CD4-positive, alpha-beta memory T cell (primary cell): ENCODE measurements at regions of chr1 and their contacts with region 1.

Region 1: DNA sequence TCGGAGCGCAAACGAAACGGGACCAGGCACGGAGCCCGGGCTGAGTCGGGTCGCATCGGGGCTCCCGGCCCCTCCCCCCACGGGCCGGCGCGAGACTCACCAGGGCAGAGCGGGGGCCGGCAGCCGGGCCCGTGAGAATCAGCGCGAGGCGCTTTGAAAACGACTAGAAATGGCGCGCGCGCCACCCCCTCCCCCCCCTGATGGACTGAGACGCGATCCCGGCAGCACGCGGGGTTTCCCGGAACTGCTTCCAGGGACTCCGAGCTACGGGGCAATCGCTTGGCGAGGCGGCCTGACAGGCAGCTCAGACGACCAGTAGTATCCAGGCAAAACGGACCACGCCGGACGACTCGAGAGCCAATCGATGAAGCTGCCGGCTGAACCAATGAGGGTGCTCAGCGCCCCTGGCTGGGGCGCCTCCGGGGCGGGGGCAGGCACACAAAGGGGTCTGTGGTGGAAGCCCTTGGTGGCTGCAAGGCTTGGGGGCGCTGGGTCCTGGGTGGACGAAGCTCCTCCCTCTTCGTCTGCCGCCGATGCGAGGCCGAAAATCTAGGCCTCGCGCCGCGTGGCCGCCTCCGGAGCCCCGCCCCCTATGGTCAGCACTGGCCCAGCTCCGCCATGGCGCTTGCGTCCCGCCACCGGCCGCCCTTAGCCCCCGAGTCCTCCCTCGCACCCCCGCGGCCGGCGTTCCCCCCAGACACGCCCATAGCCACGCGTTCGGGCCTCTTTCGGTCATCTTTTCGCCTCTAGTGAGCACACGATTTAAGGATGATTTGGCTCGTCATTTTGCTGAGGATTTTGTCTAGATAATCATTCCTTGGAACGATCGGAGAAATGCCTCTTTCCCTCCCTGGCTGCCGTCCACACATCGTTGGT is at the start of gene HNRNPR:
- DNase-seq: peak; percentile 96 to 99 (median 98)
- H3K4me3 ChIP-seq: peak within 1 kb of the TSS; percentile 79 to 89
- H3K4me3 Mint-ChIP-seq: peak within 1 kb of the TSS; percentile 92 to 99 (median 98)
- H3K27ac ChIP-seq: peak within 1 kb of the TSS; percentile 75
- H3K27ac Mint-ChIP-seq: peak within 1 kb of the TSS; percentile 93 to 99 (median 96)
- H3K4me1 ChIP-seq: peaks cover 42% of the 10 kb centered on the region
- H3K4me1 Mint-ChIP-seq: peaks cover 35 to 53% (median 42%) of the 10 kb centered on the region in 4 donors
- H3K27me3 ChIP-seq: no peaks in the 10 kb centered on the region
- H3K27me3 Mint-ChIP-seq: no peaks in the 10 kb centered on the region
- total RNA-seq, gene HNRNPR: 115 to 124 TPM

Region 2: DNA sequence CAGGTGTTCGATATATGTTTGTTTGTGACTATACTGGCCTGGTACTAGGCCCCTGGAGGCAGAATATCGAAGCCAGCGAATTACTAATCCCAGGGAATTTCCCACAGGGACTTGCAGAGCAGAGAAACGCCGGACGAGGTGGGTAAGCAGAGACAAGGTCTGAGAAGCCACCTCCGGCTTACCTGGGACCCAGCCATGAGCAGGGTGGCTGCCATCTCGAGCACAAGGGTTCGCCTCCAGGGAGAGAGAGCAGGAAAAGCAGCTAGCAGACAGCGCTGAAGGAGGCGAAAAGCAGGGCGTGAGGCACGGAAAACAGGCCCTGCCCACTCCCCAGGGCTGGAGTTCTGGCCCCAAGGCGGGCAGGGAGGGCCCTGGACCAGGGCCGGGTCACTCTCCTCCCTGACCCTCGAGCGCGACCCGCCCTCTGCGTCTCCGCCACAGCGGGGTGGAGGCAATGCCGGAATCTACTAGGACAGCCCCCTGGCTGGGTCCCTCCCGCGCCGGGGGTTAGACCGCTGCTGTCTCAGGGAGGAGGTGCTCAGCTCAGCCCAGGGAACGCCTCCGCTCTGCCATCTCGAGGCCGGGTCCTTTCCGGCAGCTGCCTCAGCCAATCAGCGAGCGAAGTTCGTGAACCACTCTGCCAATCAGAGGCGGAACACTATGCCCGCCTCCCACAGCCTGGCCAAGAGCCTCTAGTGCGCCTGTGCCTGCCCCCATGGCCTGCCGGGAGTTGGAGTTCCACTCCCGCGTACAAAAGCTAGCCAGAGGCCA is 23.6 kb after region 1 on chr1:
- CTCF ChIA-PET with region 1: interaction called, 11 read pairs
- POLR2A ChIA-PET with region 1: interaction called, 112 read pairs
- intact Hi-C with region 1: loop called (anchors 1 kb)
- DNase-seq: peak; percentile 96 to 99 (median 98)
- H3K4me3 ChIP-seq: peak overlapping the region; percentile 98 to 100
- H3K4me3 Mint-ChIP-seq: peak overlapping the region; percentile 96 to 99 (median 99)
- H3K27ac ChIP-seq: peak overlapping the region; percentile 89
- H3K27ac Mint-ChIP-seq: peak overlapping the region; percentile 95 to 100 (median 98)
- H3K4me1 ChIP-seq: peaks cover 22% of the 10 kb centered on the region
- H3K4me1 Mint-ChIP-seq: peaks cover 17 to 46% (median 28%) of the 10 kb centered on the region in 4 donors
- H3K27me3 ChIP-seq: no peaks in the 10 kb centered on the region
- H3K27me3 Mint-ChIP-seq: no peaks in the 10 kb centered on the region

Region 3: GRCh38 chr1:23403735-23404486 is 59.6 kb after region 1 on chr1:
- CTCF ChIA-PET with region 1: interaction called, 9 read pairs
- POLR2A ChIA-PET with region 1: no interaction called
- intact Hi-C with region 1: loop called (anchors 5 kb)
- DNase-seq: peak; percentile 69 to 76 (median 74)
- H3K4me3 ChIP-seq: no peak overlapping the region
- H3K4me3 Mint-ChIP-seq: no peak overlapping the region
- H3K27ac ChIP-seq: no peak overlapping the region
- H3K27ac Mint-ChIP-seq: peak overlapping the region in 2 of 7 donors; percentile 14 to 22
- H3K4me1 ChIP-seq: peaks cover 11% of the 10 kb centered on the region
- H3K4me1 Mint-ChIP-seq: peaks cover 5 to 12% (median 9%) of the 10 kb centered on the region in 4 donors
- H3K27me3 ChIP-seq: no peaks in the 10 kb centered on the region
- H3K27me3 Mint-ChIP-seq: no peaks in the 10 kb centered on the region

Region 4: GRCh38 chr1:23422241-23423030 is 78.1 kb after region 1 on chr1:
- CTCF ChIA-PET with region 1: no interaction called
- POLR2A ChIA-PET with region 1: interaction called, 11 read pairs
- intact Hi-C with region 1: no loop called
- DNase-seq: peak; percentile 41 to 65 (median 54)
- H3K4me3 ChIP-seq: no peak overlapping the region
- H3K4me3 Mint-ChIP-seq: peak overlapping the region; percentile 79 to 91 (median 87)
- H3K27ac ChIP-seq: peak overlapping the region; percentile 1
- H3K27ac Mint-ChIP-seq: peak overlapping the region; percentile 11 to 92 (median 79)
- H3K4me1 ChIP-seq: peaks cover 33% of the 10 kb centered on the region
- H3K4me1 Mint-ChIP-seq: peaks cover 25 to 35% (median 30%) of the 10 kb centered on the region in 4 donors
- H3K27me3 ChIP-seq: no peaks in the 10 kb centered on the region
- H3K27me3 Mint-ChIP-seq: peaks cover 0 to 2% of the 10 kb centered on the region in 2 donors

Region 5: DNA sequence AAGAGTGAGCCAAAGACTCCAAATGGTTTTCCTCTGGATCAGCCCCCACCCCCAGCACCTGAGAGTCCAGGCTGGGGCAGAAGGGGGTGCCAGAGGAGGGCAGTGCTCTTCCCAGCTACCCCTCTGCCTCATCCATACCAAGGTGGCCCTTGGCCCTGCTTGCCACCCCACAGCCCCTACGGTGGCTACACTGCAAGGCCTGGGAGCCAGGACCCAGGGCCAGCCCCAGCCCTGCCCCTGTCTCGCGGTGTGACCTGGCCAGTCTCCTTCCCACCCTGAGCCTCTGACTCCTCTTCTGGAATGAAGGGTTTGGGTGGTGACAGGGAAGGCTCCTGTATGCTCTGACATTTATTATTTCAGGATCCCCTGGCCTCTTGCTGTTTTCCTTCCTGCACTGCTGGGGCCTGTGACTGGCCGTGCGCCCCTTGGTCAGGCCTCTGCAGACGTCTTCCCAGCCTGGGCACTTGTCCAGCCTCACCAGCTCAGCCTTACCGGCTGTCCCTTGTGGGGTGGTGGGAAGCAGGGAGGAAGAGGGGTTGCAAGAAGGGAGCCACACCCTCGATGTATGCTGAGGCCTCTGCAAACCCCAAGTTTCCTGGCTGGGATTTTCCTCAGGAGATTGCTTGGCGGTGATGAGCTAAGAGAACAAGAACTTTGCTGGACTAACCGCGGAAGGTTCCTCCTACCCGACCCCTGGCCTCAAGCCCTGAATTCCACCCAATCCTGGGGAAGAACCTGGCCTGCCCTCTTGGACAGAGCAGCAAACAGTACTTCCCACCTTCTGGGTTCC is 126.1 kb after region 1 on chr1:
- CTCF ChIA-PET with region 1: no interaction called
- POLR2A ChIA-PET with region 1: no interaction called
- intact Hi-C with region 1: no loop called
- DNase-seq: no peak
- H3K4me3 ChIP-seq: no peak overlapping the region
- H3K4me3 Mint-ChIP-seq: no peak overlapping the region
- H3K27ac ChIP-seq: no peak overlapping the region
- H3K27ac Mint-ChIP-seq: no peak overlapping the region
- H3K4me1 ChIP-seq: no peaks in the 10 kb centered on the region
- H3K4me1 Mint-ChIP-seq: no peaks in the 10 kb centered on the region
- H3K27me3 ChIP-seq: no peaks in the 10 kb centered on the region
- H3K27me3 Mint-ChIP-seq: no peaks in the 10 kb centered on the region

Region 6: GRCh38 chr1:23530747-23531561 is 186.6 kb after region 1 on chr1 and contains the start of gene E2F2:
- CTCF ChIA-PET with region 1: no interaction called
- POLR2A ChIA-PET with region 1: interaction called, 11 read pairs
- intact Hi-C with region 1: loop called (anchors 1 kb)
- DNase-seq: peak; percentile 78 to 86 (median 82)
- H3K4me3 ChIP-seq: peak within 1 kb of the TSS; percentile 40 to 64
- H3K4me3 Mint-ChIP-seq: peak within 1 kb of the TSS; percentile 90 to 96 (median 92)
- H3K27ac ChIP-seq: peak within 1 kb of the TSS; percentile 60
- H3K27ac Mint-ChIP-seq: peak within 1 kb of the TSS; percentile 86 to 97 (median 94)
- H3K4me1 ChIP-seq: peaks cover 82% of the 10 kb centered on the region
- H3K4me1 Mint-ChIP-seq: peaks cover 58 to 90% (median 80%) of the 10 kb centered on the region in 4 donors
- H3K27me3 ChIP-seq: no peaks in the 10 kb centered on the region
- H3K27me3 Mint-ChIP-seq: no peaks in the 10 kb centered on the region
- total RNA-seq, gene E2F2: 1.1 to 1.2 TPM